ENCODE measurements at regions of chr16 and their contacts with region 1.

Region 1: DNA sequence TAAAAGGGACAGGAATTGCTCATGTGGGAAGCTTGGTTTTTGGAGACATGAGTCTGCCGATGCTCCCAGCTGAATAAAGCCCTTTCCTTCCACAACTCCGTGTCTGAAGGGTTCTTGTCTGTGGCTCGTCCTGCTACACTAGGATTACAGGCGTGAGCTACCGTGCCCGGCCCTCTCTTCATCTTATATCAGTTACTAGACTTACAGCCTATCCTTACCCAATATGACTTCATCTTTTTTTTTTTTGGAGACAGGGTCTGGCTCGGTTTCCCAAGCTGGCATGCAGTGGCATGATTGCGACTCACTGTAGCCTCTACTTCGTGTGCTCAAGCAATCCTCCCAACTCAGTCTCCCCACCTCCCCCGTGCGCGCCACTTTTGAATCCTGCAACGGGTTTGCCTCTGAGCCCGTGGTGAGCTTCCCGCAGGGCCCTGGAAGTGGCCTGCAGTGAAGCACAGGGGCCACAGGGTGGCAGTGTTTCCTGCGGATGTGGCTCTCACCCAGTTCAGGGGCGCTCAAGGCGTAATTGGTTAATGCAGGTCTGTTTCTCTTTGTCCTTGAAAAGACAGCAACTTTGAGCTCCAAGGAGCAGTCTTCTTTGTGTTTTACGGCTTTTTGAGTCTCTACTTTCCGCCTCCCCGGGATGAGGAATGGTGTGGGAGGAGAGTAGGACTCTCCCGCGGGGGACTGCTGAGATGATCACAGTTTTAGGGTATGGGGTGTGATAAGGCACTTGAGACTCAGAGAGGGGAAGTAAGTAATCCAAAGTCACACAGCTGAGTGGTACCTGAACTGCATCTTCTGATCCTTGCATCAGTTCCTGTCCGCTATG is 22.7 kb upstream of the GPRC5B start:
- DNase-seq: no peak
- H3K4me3 ChIP-seq: no peak overlapping the region
- CTCF ChIP-seq: peak; percentile 100

Region 2: DNA sequence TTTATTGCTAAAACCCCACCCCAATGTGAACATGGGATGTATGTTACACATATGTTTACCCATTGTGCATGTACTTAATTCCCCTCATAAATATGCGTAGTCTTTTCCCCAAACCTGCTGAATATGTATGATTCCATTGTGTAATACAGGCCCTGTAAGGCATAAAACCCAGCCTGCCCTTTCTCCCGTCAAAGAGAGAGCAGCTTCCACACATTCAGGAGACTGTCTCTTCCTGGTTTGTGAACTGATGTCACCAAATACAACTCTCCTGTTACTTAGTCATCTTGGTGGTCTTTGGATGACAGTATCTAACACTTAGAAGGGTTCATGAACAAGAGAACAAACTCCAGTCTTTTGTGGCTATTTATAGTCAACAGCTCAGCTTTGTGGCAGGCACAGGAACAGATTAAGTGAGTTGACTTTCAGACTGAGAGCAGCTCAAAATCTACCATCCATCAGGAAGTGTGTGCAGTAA is 948.3 kb before region 1 on chr16:
- CTCF ChIA-PET with region 1: no interaction called
- POLR2A ChIA-PET with region 1: no interaction called
- DNase-seq: no peak
- H3K4me3 ChIP-seq: no peak overlapping the region
- CTCF ChIP-seq: no peak

Region 3: DNA sequence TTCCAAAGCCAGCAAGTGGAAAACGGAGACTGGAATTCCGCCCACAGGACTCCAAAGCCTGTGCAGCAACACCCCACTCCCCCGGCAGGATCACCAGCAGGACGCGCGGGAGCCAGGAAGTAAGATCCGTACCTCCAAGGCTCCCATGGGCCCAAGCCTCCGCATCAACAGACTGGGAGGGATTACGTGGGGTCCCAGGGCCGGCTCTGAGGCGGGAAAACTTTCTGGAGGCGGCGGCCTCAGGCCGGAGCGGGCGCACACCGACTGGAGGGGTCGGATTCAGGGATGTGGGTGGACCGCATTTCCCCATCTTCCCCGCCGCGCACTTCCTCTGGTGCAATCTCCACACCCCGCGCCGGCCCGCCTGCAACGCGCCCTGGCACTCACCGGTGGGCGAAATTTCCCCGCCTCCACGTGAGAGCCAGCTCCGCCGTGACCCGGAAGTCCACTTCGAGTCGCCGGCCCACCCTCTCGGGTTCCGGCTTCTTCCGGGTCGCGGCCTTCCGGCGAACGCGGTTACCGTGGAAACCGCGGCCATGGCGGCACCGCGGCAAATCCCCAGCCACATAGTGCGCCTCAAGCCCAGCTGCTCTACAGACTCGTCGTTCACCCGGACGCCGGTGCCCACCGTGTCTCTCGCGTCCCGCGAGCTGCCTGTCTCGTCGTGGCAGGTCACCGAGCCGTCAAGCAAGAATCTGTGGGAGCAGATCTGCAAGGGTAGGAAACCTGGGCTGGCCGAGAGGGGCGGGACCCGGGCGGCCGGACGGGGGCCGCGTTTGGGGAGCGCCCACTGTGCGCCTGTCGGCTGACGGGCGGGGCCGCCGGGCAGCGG is 189.4 kb before region 1 on chr16 and contains the starts of genes IQCK and KNOP1:
- CTCF ChIA-PET with region 1: no interaction called
- POLR2A ChIA-PET with region 1: no interaction called
- DNase-seq: peak; percentile 17
- H3K4me3 ChIP-seq: peak within 1 kb of the TSS; percentile 99
- CTCF ChIP-seq: no peak

Region 4: DNA sequence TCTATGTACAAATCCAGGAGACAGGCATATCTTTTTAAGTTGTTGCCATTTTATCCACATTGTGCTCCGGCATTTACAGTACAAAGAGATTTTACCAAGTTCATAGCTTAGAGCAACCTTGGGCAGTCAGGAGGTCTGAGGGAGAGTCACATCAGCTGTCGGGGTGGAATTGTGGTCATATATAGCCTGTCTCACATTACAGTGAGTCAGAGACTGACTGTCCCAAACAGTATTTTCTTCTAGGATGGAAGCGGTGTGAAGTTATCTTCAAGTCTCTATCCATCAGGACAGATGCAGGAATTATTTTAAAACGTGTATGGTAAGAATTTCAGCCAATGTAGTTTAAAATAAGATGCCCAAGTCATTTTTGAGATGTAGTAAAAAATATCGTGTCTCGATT is 75.7 kb before region 1 on chr16:
- CTCF ChIA-PET with region 1: no interaction called
- POLR2A ChIA-PET with region 1: no interaction called
- DNase-seq: peak; percentile 41
- H3K4me3 ChIP-seq: no peak overlapping the region
- CTCF ChIP-seq: no peak

Region 5: GRCh38 chr16:20300312-20301097 is 393.1 kb after region 1 on chr16:
- CTCF ChIA-PET with region 1: interaction called, 73 read pairs
- POLR2A ChIA-PET with region 1: no interaction called
- DNase-seq: no peak
- H3K4me3 ChIP-seq: no peak overlapping the region
- CTCF ChIP-seq: peak; percentile 60

Measured in AG04449 (cell line).